ENCODE measurements at regions of chr17 and their contacts with region 1.

Region 1: DNA sequence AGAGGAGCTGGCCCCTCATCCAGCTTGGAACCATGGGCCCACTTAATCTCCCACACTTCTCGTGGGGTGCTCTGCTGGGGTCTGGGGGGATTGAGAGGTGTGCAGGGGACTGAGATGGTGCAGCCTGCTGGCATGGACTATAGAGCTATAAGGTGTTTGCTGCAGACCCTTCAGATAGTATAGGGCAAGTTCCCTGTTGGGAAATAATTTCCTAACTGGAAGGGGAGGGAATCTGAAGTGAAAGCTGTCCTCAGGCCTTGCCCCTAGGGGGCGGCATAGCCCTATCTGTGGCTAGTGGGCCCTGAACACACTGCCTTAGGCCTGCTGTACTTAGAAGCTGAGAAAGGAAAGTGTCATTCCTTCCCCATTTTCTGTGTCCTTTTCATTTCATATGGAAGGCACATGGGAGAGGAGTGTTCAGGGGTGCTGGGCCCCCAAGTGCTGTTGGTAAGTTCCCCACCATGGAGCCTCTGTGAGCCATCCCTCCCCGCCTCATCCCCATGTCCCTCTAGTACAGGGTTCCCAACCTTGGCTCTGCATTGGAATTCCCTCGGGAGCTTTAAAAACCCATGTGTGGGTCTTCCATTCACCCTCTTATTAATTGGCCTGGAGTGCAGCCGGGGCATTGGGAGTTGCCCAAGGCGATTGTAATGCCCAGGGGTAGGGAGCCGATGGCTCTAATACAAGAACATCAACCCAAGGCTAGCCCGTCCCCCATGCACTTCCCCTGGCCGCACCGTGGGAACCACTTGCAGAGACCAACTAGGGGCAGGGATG is 19.7 kb downstream of the GOSR2 start:
- DNase-seq: peak; percentile 64 to 87 (median 76)
- H3K4me3 ChIP-seq: no peak overlapping the region
- H3K27ac ChIP-seq: peak overlapping the region in 56 of 59 donors; percentile 12 to 90 (median 73)
- H3K27me3 ChIP-seq: no peaks in the 10 kb centered on the region
- CTCF ChIP-seq: peak; percentile 56 to 91 (median 83)

Region 2: DNA sequence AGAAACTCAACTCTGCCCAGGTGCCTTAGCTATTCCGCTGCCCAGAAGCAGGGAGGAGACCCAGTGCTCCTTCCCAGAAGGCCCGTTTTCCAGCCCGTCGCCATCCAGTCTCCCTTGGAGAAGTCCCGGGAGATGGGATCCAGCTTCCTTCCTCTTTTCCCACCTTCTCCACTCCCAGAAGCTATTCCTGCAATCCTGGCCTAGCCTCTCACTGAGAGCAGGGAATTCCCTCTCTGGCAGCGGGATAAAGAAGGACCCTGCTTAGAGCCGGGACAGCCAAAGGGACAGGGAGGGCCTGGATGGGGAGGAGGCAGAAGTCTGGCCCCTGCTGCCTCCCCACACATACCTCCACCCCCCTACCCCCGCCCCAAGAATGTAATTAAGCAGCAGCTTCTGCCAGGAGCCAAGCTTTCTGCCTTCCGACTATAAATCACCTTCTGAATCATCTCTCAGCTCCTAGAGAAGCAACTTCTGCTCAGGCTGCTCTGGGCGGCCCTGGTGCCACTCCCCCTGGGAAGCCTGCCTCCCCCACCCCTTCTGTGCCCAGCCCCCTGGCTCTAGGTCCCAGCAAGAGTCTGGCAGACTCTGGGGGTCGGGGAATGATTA is 130.5 kb before region 1 on chr17:
- intact Hi-C with region 1: no loop called
- DNase-seq: no peak
- H3K4me3 ChIP-seq: no peak overlapping the region
- H3K27ac ChIP-seq: no peak overlapping the region
- H3K27me3 ChIP-seq: peaks cover 0 to 24% (median 1%) of the 10 kb centered on the region in 45 donors
- CTCF ChIP-seq: no peak

Region 3: GRCh38 chr17:46995841-46996571 is 53.4 kb after region 1 on chr17:
- intact Hi-C with region 1: loop called (anchors 1 to 2 kb)
- DNase-seq: no peak
- H3K4me3 ChIP-seq: no peak overlapping the region
- H3K27ac ChIP-seq: no peak overlapping the region
- H3K27me3 ChIP-seq: no peaks in the 10 kb centered on the region
- CTCF ChIP-seq: no peak

Measured in dorsolateral prefrontal cortex (tissue), 120 donors.